CD8-positive, alpha-beta T cell (primary cell): ENCODE measurements at regions of chr3 and their contacts with region 1.

Region 1: DNA sequence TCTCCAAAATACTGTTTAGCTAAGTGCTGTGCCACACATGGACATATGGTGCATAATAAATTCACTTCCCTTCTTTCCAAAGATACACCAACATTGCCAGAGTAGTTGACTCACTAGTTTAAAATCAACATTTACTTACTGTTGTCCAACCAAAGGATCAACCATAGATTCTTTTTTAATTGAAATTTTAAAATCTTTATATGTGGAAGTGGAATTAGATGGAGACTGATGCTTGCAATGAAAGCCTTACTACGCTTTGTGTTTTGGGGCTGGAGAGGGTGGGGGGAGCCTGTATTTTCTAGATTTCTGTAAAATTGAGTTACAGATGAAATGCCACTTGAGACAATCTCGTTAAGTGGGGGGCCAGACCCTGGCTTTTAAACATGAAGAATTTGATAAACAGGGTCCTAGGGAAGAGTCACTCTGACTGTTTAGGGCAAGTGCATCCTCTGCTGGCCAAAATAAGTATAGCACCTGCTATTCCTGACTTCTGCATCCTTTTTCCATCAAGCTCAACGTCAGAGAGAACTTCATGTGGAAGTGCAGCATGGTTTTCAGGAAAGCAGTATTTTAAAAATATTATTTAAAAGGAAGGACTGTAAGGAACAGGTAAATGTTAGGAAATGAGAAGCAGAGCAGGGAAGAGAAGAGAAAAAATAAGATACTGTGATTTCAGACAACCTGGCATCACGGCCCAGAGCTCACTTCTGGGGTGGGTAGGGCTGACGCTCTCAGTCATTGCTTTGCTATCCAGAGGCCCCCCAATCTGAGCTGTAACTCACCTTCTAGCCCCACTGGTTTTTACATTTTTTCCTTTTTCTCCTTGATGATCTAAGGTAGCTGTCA is 76.7 kb downstream of the BOC start:
- DNase-seq: peak in 7 of 9 experiments; percentile 14 to 68 (median 56)
- ATAC-seq: peak; percentile 59
- H3K4me3 ChIP-seq: no peak overlapping the region
- H3K4me3 Mint-ChIP-seq: no peak overlapping the region
- H3K27ac ChIP-seq: no peak overlapping the region
- H3K27ac Mint-ChIP-seq: no peak overlapping the region
- H3K4me1 ChIP-seq: no peaks in the 10 kb centered on the region
- H3K4me1 Mint-ChIP-seq: no peaks in the 10 kb centered on the region
- H3K27me3 ChIP-seq: no peaks in the 10 kb centered on the region
- H3K27me3 Mint-ChIP-seq: no peaks in the 10 kb centered on the region
- CTCF ChIP-seq: peak; percentile 99

Region 2: GRCh38 chr3:112582244-112582874 is 705.7 kb before region 1 on chr3:
- CTCF ChIA-PET with region 1: interaction called, 10 read pairs
- POLR2A ChIA-PET with region 1: no interaction called
- intact Hi-C with region 1: loop called (anchors 1 to 2 kb)
- DNase-seq: peak in 4 of 9 experiments; percentile 6 to 53 (median 34)
- ATAC-seq: peak; percentile 42
- H3K4me3 ChIP-seq: no peak overlapping the region
- H3K4me3 Mint-ChIP-seq: no peak overlapping the region
- H3K27ac ChIP-seq: no peak overlapping the region
- H3K27ac Mint-ChIP-seq: no peak overlapping the region
- H3K4me1 ChIP-seq: no peaks in the 10 kb centered on the region
- H3K4me1 Mint-ChIP-seq: peaks cover 3% of the 10 kb centered on the region
- H3K27me3 ChIP-seq: no peaks in the 10 kb centered on the region
- H3K27me3 Mint-ChIP-seq: no peaks in the 10 kb centered on the region
- CTCF ChIP-seq: peak; percentile 38

Region 3: DNA sequence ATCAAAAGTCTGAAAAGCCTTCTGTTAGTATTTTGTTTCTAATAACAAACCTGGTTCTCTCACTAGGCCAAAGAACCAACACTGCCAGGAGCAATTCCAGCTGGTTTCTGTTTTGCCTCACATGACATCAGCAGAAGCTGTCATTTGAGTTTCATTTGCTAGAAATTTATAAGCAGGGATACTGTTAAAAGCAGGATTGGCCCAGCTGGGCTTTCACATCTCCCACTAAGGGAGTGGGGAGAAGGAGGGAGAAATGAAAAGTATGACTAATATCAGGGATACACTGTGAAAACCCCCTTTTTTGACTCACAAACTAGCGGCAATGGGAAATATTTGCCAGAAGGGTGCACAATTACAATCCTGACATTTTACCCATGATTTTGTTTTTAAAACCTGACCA is 652.4 kb before region 1 on chr3:
- CTCF ChIA-PET with region 1: interaction called, 12 read pairs
- POLR2A ChIA-PET with region 1: no interaction called
- intact Hi-C with region 1: no loop called
- DNase-seq: no peak
- ATAC-seq: no peak
- H3K4me3 ChIP-seq: no peak overlapping the region
- H3K4me3 Mint-ChIP-seq: no peak overlapping the region
- H3K27ac ChIP-seq: no peak overlapping the region
- H3K27ac Mint-ChIP-seq: no peak overlapping the region
- H3K4me1 ChIP-seq: no peaks in the 10 kb centered on the region
- H3K4me1 Mint-ChIP-seq: no peaks in the 10 kb centered on the region
- H3K27me3 ChIP-seq: no peaks in the 10 kb centered on the region
- H3K27me3 Mint-ChIP-seq: no peaks in the 10 kb centered on the region
- CTCF ChIP-seq: no peak

Region 4: DNA sequence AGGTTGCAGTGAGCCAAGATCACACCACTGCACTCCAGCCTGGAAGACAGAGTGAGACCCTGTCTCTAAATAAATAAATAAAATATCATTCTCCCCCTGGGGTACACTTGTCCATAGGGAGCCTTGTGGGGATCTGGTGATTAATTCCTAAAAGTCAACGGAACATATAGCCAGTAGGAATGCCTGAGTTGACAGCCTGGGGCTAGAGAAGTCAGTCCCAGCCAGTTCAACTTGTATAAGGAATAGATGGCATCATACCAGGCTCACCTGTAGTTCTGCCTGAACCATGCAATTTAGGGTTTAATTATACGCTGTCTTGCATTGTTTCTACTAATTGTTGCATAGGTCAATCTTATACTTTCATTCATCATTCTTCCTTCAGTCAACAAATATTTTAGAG is 82.5 kb before region 1 on chr3:
- CTCF ChIA-PET with region 1: no interaction called
- POLR2A ChIA-PET with region 1: no interaction called
- intact Hi-C with region 1: no loop called
- DNase-seq: no peak
- ATAC-seq: no peak
- H3K4me3 ChIP-seq: no peak overlapping the region
- H3K4me3 Mint-ChIP-seq: no peak overlapping the region
- H3K27ac ChIP-seq: no peak overlapping the region
- H3K27ac Mint-ChIP-seq: no peak overlapping the region
- H3K4me1 ChIP-seq: no peaks in the 10 kb centered on the region
- H3K4me1 Mint-ChIP-seq: no peaks in the 10 kb centered on the region
- H3K27me3 ChIP-seq: no peaks in the 10 kb centered on the region
- H3K27me3 Mint-ChIP-seq: peaks cover 33% of the 10 kb centered on the region
- CTCF ChIP-seq: no peak

Region 5: DNA sequence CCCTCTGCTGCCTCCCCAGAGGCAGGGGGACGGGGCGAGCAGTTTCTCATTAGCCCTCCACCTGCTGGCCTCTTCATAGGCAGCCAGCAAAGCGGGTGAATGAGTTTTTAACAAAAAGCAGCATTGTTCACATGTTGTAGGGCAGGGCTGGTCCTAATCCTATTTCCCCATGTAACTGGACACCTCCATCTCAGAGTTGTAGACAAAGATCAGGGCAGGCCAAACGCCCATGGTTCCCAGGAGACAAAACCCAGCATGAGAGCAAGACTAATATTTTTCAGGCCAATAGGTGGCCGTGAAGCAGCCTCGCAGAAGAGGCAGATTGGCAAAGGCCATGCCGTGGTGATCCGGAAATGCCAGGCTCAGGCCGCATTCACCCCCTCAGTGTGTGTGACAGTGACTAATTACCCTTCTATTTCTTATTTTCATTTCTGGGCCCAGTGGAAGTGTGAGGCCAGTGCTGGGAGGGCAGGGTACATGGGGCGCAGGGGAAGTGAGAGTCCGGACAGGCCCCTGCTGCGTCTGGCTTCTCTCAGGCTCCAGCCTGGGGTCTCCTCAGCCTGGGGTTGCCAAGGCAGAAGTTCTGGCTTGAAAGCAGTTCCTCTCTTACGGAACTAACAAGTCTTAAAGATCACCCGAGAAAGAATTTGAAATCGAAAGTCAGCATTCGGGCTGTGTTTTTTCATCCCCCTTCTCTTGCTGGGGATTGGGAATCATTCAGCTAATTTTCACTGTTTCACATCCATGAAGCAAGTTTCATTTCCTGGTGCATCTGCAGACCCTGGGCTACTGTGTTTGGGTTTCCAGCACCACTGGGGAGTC is 11.9 kb before region 1 on chr3:
- CTCF ChIA-PET with region 1: interaction called, 20 read pairs
- POLR2A ChIA-PET with region 1: no interaction called
- intact Hi-C with region 1: no loop called
- DNase-seq: peak in 1 of 9 experiments; percentile 14
- ATAC-seq: no peak
- H3K4me3 ChIP-seq: no peak overlapping the region
- H3K4me3 Mint-ChIP-seq: peak overlapping the region; percentile 35
- H3K27ac ChIP-seq: no peak overlapping the region
- H3K27ac Mint-ChIP-seq: no peak overlapping the region
- H3K4me1 ChIP-seq: no peaks in the 10 kb centered on the region
- H3K4me1 Mint-ChIP-seq: peaks cover 7% of the 10 kb centered on the region
- H3K27me3 ChIP-seq: no peaks in the 10 kb centered on the region
- H3K27me3 Mint-ChIP-seq: peaks cover 2% of the 10 kb centered on the region
- CTCF ChIP-seq: no peak